ENCODE measurements at regions of chr4 and their contacts with region 1.

Region 1: DNA sequence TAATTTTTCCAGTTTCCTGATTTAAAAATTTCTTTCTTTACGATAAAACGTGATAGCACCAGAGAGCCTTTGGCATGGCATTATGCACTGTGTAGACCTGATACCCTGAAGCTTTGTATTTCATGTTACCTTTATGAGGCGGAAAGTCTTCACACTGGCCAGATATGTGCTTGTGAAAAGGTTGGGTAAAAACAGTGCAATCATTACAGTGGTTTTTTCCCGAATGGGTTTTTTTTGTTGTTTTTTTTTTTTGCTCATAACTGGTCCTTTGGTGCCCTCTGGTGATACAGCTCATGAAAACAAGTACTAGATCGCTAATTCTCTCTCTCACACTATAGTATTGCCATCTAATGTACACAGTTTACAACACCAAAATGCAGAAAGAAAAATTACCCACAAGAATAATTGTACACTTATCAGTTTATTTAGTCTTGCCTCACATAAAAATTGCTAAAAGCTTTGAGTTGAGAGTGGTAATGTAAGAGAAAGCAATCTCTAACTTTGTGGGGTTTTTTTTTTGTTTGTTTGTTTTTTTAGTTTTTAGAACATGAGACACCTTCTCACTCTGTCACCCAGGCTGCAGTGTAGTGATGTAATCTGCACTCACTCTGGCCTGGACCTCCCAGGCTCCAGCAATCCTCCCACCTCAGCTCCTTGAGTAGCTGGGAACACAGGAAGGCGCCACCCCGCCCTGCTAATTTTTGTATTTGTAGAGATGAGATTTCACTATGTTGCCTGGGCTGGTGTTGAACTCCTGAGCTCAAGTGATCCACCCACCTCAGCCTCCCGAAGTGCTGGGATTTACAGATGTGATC is 21.3 kb downstream of the SPCS3 start:
- DNase-seq: no peak
- H3K4me3 ChIP-seq: no peak overlapping the region
- H3K27ac ChIP-seq: no peak overlapping the region
- H3K4me1 ChIP-seq: peaks cover 0 to 3% (median 0%) of the 10 kb centered on the region in 4 donors
- H3K27me3 ChIP-seq: no peaks in the 10 kb centered on the region
- CTCF ChIP-seq: peak in 4 of 5 experiments; percentile 40 to 58 (median 50)
- EP300 ChIP-seq: no peak
- POLR2A ChIP-seq: no peak

Region 2: GRCh38 chr4:175947117-175947722 is 393.9 kb before region 1 on chr4:
- in situ Hi-C with region 1: loop called in 1 of 4 experiments (anchors 25 kb)
- intact Hi-C with region 1: no loop called
- DNase-seq: no peak
- H3K4me3 ChIP-seq: no peak overlapping the region
- H3K27ac ChIP-seq: no peak overlapping the region
- H3K4me1 ChIP-seq: peaks cover 0 to 4% (median 2%) of the 10 kb centered on the region in 4 donors
- H3K27me3 ChIP-seq: no peaks in the 10 kb centered on the region
- CTCF ChIP-seq: peak; percentile 48 to 69 (median 62)
- EP300 ChIP-seq: no peak
- POLR2A ChIP-seq: no peak

Region 3: DNA sequence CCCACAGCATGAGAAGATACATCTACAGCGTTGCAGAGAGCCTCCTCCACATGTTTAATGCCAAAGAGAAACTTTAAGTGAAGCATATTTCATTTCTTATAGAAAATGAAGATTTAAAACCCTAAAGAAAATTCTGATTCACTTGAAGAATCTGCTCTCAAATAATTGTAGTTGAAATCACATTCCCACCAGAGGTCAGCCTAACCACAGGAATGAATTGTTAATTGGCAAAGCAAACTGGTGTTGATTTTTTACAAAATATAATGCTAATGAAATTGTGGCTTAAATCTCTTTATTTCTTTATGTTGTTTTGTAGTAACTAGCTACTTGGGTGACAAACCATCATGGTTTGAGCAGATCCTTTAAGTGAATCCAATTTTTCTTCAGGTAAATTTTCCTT is 306.6 kb before region 1 on chr4:
- in situ Hi-C with region 1: loop called in 2 of 4 experiments (anchors 25 kb)
- intact Hi-C with region 1: loop called (anchors 1 kb)
- DNase-seq: no peak
- H3K4me3 ChIP-seq: no peak overlapping the region
- H3K27ac ChIP-seq: no peak overlapping the region
- H3K4me1 ChIP-seq: no peaks in the 10 kb centered on the region
- H3K27me3 ChIP-seq: no peaks in the 10 kb centered on the region
- CTCF ChIP-seq: peak in 3 of 5 experiments; percentile 9 to 27 (median 24)
- EP300 ChIP-seq: no peak
- POLR2A ChIP-seq: no peak

Region 4: DNA sequence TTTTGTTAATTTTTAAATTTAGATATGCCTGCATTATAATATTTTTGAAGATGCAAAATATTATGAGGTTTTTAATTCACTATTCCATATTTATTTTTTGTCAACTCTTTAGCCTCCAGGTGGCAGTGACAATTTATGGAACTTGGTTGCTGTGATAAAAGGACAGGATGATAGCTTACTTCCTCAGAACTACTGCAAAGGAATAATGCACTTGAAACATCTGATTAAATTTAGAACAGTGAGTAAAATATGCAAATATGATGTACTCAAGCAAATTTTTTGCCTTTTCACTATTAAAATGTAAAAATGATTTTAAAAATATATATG is 190.8 kb before region 1 on chr4:
- in situ Hi-C with region 1: loop called in 1 of 4 experiments (anchors 10 kb)
- intact Hi-C with region 1: no loop called
- DNase-seq: no peak
- H3K4me3 ChIP-seq: no peak overlapping the region
- H3K27ac ChIP-seq: no peak overlapping the region
- H3K4me1 ChIP-seq: no peaks in the 10 kb centered on the region
- H3K27me3 ChIP-seq: no peaks in the 10 kb centered on the region
- CTCF ChIP-seq: peak in 3 of 5 experiments; percentile 26 to 50 (median 29)
- EP300 ChIP-seq: no peak
- POLR2A ChIP-seq: no peak

Measured in transverse colon (tissue), 4 donors.